Activated T-helper 1 cell treated with anti-CD3 and anti-CD28 coated beads, Interleukin-12 subunit alpha, Interleukin-12 subunit beta, Interleukin-2, Interleukin-4 antibody, amounts not matched to agents 30 ng/mL and 10 ng/mL and 1 ng/mL, durations not matched to agents 14 hours and 24 hours and 36 hours (primary cell): ENCODE measurements at regions of chr7 and their contacts with region 1.

Region 1: DNA sequence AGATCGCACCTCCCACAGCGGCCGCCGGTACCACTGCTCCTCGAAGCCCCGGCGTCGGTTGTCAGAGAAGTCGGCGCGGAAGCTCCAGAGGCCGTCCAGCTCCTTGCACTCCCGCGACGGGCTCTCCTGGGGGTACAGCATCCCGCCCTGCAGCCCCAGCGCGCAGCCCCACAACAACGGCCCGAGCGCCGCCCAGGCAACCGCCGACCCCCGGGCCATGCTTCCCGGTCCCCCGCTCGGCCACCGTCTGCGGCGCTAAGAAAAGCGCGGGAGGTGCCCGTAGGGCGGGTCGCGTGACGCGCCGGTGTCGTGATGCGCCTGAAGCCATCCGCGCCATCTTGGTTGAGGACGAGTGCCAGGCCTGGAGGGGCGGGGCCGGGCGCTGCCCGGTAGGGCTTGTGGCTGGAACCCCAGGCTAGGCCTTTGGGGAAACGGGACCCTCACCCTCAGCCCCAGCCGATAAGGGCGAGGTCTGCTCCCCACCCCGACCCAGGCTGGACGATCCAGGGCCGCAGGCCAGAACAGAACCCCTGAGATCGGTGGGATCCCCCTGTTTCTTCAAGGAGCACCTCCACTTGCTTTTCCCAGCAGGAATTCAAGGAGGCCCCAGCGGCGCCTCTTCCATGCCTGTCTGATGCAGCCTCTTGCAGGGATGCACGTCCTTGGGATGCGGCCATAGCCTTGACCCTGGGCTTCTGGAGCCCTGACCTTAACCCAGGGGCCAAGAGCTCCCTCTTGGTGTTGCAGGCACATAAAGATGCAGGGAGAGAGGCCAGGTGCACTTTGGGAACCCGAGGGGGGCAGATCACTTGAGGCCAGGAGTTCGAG is at the start of gene GUSB:
- DNase-seq: peak; percentile 88
- H3K4me3 Mint-ChIP-seq: peak within 1 kb of the TSS; percentile 87
- H3K27ac Mint-ChIP-seq: peak within 1 kb of the TSS; percentile 90
- H3K4me1 Mint-ChIP-seq: peaks cover 7% of the 10 kb centered on the region
- H3K27me3 Mint-ChIP-seq: no peaks in the 10 kb centered on the region
- total RNA-seq, gene GUSB: 49.7 and 50.1 TPM in 2 replicates

Region 2: GRCh38 chr7:65872776-65873581 is 109.2 kb before region 1 on chr7 and contains the start of gene VKORC1L1:
- intact Hi-C with region 1: loop called (anchors 2 kb)
- DNase-seq: peak; percentile 92
- H3K4me3 Mint-ChIP-seq: peak within 1 kb of the TSS; percentile 85
- H3K27ac Mint-ChIP-seq: peak within 1 kb of the TSS; percentile 73
- H3K4me1 Mint-ChIP-seq: peaks cover 4% of the 10 kb centered on the region
- H3K27me3 Mint-ChIP-seq: no peaks in the 10 kb centered on the region
- total RNA-seq, gene VKORC1L1: 28.8 and 30.1 TPM in 2 replicates

Region 3: DNA sequence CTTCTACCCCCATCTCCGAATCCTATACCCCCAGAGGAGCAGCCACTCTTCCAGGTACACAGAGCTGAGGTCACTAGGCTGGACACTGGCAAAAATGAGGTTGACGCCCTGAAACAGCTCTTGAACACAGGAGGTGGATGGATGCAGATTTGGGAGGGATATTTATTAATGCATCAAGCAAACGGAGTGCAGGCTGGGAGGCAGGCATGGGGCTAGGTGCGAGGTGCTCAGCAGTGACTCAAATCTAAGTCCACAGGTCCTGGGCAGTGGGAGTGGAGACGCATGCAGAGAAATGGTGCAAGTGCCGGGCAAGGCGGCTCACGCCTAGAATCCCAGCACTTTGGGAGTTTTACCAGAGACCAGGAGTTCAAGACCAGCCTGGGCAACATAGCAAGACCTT is 11.2 kb before region 1 on chr7:
- intact Hi-C with region 1: no loop called
- DNase-seq: no peak
- H3K4me3 Mint-ChIP-seq: no peak overlapping the region
- H3K27ac Mint-ChIP-seq: no peak overlapping the region
- H3K4me1 Mint-ChIP-seq: no peaks in the 10 kb centered on the region
- H3K27me3 Mint-ChIP-seq: no peaks in the 10 kb centered on the region